B cell (primary cell): ENCODE measurements at regions of chr13 and their contacts with region 1.

Region 1: DNA sequence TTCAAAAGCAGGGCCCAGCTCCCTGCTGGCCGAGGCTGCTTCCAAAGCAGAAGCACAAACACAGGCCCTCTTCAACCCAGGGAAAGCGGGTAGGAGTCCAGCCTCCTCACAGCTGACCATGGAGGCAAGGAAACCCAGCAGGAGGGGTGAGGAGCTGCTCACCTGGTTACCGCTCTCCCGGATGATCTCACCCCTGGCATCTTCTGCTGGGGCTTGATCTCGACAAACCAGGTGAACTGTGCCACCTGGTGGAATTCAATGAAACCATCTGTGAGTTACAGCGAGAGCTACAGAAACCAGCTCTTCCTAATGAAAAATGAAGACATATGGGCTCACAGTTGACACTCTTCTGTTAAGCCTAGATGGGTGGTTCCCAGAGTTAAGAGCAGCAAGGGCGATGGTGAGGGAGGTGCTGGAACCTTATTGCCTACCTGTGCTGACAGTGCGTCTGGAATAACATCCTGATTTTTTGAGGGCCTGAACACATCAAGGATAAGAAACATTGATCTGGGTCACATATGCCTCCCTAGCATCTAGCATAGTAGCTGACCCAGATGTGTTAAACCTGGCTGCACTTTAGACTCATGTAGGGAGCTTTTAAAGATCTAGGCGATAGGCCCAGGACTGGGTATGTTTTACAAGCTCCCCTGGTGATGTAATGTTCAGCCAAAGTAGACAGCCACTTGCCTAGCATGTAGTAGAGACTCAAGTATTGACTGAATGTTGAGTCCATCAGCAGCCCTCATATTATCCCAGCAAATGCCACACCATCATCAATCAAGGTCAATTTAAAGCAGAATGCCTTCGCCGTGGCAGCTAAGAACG is 6.1 kb downstream of the DHRS12 start:
- DNase-seq: peak; percentile 76
- ATAC-seq: peak; percentile 60
- H3K4me3 ChIP-seq: no peak overlapping the region
- H3K4me3 Mint-ChIP-seq: no peak overlapping the region
- H3K27ac ChIP-seq: no peak overlapping the region
- H3K27ac Mint-ChIP-seq: peak overlapping the region; percentile 5
- H3K4me1 ChIP-seq: peaks cover 37 to 39% of the 10 kb centered on the region in 2 donors
- H3K4me1 Mint-ChIP-seq: peaks cover 45% of the 10 kb centered on the region
- H3K27me3 ChIP-seq: no peaks in the 10 kb centered on the region
- H3K27me3 Mint-ChIP-seq: no peaks in the 10 kb centered on the region
- CTCF ChIP-seq: peak; percentile 68

Region 2: GRCh38 chr13:51125498-51126226 is 672.2 kb before region 1 on chr13:
- CTCF ChIA-PET with region 1: interaction called, 55 read pairs
- POLR2A ChIA-PET with region 1: no interaction called
- intact Hi-C with region 1: no loop called
- DNase-seq: peak; percentile 71
- ATAC-seq: peak; percentile 80
- H3K4me3 ChIP-seq: no peak overlapping the region
- H3K4me3 Mint-ChIP-seq: no peak overlapping the region
- H3K27ac ChIP-seq: no peak overlapping the region
- H3K27ac Mint-ChIP-seq: no peak overlapping the region
- H3K4me1 ChIP-seq: peaks cover 0 to 8% of the 10 kb centered on the region in 2 donors
- H3K4me1 Mint-ChIP-seq: peaks cover 4% of the 10 kb centered on the region
- H3K27me3 ChIP-seq: peaks cover 0 to 6% (median 2%) of the 10 kb centered on the region in 4 experiments
- H3K27me3 Mint-ChIP-seq: peaks cover 25% of the 10 kb centered on the region
- CTCF ChIP-seq: peak; percentile 77

Region 3: GRCh38 chr13:51419001-51419636 is 378.8 kb before region 1 on chr13:
- CTCF ChIA-PET with region 1: interaction called, 12 read pairs
- POLR2A ChIA-PET with region 1: no interaction called
- intact Hi-C with region 1: no loop called
- DNase-seq: peak; percentile 60
- ATAC-seq: peak; percentile 78
- H3K4me3 ChIP-seq: peak overlapping the region in 3 of 5 experiments; percentile 7 to 42 (median 20)
- H3K4me3 Mint-ChIP-seq: peak overlapping the region; percentile 82
- H3K27ac ChIP-seq: peak overlapping the region; percentile 2 to 53
- H3K27ac Mint-ChIP-seq: peak overlapping the region; percentile 87
- H3K4me1 ChIP-seq: peaks cover 39 to 72% of the 10 kb centered on the region in 2 donors
- H3K4me1 Mint-ChIP-seq: peaks cover 75% of the 10 kb centered on the region
- H3K27me3 ChIP-seq: no peaks in the 10 kb centered on the region
- H3K27me3 Mint-ChIP-seq: no peaks in the 10 kb centered on the region
- CTCF ChIP-seq: no peak

Region 4: DNA sequence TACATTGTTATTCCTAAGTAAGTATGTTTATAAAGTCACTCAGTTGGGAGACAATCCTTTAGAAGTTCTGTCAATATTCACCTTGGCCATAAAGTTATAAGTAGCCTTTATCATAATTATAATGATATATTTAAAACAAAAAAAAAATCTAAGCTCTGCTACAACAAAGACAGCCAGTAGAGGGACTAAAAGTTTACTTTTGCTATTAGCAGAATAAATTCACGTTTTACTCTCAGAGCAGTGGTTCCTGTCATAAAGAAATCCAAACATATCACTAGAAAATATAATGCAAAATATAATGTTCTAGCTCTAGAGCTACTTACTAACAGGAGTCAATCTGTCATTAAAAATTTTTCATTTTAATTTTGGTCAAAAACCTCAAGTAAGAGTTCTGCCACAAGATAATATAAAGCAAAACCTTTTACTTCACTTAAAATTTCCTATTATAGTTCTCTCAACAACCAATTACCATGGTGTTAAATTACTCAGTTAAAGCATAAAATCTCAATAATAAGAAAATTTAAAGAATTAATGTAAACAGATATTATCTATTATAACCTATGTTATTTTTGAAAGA is 362.8 kb before region 1 on chr13:
- CTCF ChIA-PET with region 1: interaction called, 101 read pairs
- POLR2A ChIA-PET with region 1: no interaction called
- intact Hi-C with region 1: loop called (anchors 1 kb)
- DNase-seq: peak; percentile 50
- ATAC-seq: no peak
- H3K4me3 ChIP-seq: no peak overlapping the region
- H3K4me3 Mint-ChIP-seq: no peak overlapping the region
- H3K27ac ChIP-seq: no peak overlapping the region
- H3K27ac Mint-ChIP-seq: no peak overlapping the region
- H3K4me1 ChIP-seq: no peaks in the 10 kb centered on the region
- H3K4me1 Mint-ChIP-seq: peaks cover 7% of the 10 kb centered on the region
- H3K27me3 ChIP-seq: no peaks in the 10 kb centered on the region
- H3K27me3 Mint-ChIP-seq: no peaks in the 10 kb centered on the region
- CTCF ChIP-seq: peak; percentile 86

Region 5: DNA sequence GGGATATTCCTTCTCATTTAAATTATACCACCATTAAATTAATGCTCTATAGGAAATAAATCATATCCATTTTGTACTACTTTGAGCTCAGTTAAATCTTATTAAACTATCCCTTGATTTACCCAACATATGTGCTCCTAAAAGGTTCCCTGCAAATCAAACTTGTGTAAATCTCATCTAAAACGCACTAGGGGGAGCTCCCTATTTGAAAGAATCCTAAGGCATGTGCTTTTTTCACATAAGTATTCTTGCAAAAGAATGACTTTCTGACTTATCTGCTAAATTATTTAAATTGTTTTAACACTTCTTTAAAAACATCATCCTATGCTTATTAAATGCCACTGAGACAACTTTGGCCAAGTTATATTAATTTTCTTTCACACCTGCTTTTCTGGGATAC is 353.0 kb before region 1 on chr13:
- CTCF ChIA-PET with region 1: interaction called, 57 read pairs
- POLR2A ChIA-PET with region 1: no interaction called
- intact Hi-C with region 1: no loop called
- DNase-seq: peak; percentile 25
- ATAC-seq: no peak
- H3K4me3 ChIP-seq: no peak overlapping the region
- H3K4me3 Mint-ChIP-seq: no peak overlapping the region
- H3K27ac ChIP-seq: no peak overlapping the region
- H3K27ac Mint-ChIP-seq: no peak overlapping the region
- H3K4me1 ChIP-seq: no peaks in the 10 kb centered on the region
- H3K4me1 Mint-ChIP-seq: peaks cover 9% of the 10 kb centered on the region
- H3K27me3 ChIP-seq: no peaks in the 10 kb centered on the region
- H3K27me3 Mint-ChIP-seq: no peaks in the 10 kb centered on the region
- CTCF ChIP-seq: peak; percentile 30

Region 6: DNA sequence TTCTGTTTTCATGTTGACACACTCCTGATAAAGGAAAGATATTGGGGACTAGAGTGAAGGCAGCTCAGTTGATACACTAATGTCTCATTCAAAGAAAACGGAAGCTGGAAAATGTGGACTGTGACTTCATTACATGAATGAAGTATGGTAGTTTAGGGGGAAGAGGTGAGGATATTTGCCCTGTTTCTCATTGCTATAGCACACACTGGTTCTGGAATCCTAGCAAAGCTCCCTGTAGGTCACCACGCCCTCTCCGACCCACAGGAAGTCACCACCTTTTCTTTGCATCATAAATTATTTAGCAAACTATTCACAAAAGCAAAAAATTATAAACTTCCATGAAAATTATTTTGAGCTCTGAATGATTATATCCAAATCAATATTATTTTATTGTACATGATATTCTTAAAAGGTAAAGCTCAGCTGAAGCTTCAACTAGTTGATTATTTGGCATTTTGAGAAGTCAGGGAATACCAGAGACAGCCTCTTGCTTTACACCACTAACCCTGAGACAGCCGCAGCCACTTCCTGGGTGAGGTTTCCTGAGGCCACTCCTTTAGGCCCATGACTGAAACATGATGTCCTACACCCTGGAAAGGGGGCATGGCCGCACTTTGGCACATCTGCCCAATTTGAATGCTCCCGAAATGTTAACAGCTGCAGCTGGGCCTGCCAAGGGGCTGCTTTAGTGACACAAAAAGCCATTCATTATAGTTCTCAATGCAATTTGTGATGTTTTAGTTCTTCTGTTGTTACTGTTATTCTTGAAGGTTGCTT is 263.6 kb before region 1 on chr13:
- CTCF ChIA-PET with region 1: no interaction called
- POLR2A ChIA-PET with region 1: no interaction called
- intact Hi-C with region 1: no loop called
- DNase-seq: peak; percentile 13
- ATAC-seq: peak; percentile 28
- H3K4me3 ChIP-seq: peak overlapping the region in 1 of 5 experiments; percentile 33
- H3K4me3 Mint-ChIP-seq: peak overlapping the region; percentile 27
- H3K27ac ChIP-seq: peak overlapping the region in 1 of 2 donors; percentile 46
- H3K27ac Mint-ChIP-seq: peak overlapping the region; percentile 53
- H3K4me1 ChIP-seq: peaks cover 11 to 14% of the 10 kb centered on the region in 2 donors
- H3K4me1 Mint-ChIP-seq: peaks cover 26% of the 10 kb centered on the region
- H3K27me3 ChIP-seq: no peaks in the 10 kb centered on the region
- H3K27me3 Mint-ChIP-seq: no peaks in the 10 kb centered on the region
- CTCF ChIP-seq: no peak

Region 7: DNA sequence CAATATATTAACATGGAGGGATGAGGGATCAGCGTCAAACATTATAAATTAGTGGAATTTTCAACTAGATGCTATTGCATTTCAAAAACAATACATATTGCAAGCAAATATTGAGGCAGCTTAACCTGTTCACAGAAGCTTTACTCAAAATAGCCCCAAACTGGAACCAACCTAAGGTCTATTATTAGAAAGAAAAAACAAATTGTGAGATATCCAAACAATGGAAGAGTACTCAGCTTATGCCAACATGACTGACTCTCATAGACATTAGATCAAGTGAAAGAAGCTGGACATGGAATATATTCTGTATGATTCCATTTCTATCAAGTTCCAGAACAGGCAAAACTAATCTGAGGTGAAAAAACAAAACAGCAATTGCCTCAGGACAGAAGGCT is 389.1 kb after region 1 on chr13:
- CTCF ChIA-PET with region 1: no interaction called
- POLR2A ChIA-PET with region 1: no interaction called
- intact Hi-C with region 1: no loop called
- DNase-seq: no peak
- ATAC-seq: no peak
- H3K4me3 ChIP-seq: no peak overlapping the region
- H3K4me3 Mint-ChIP-seq: no peak overlapping the region
- H3K27ac ChIP-seq: no peak overlapping the region
- H3K27ac Mint-ChIP-seq: no peak overlapping the region
- H3K4me1 ChIP-seq: no peaks in the 10 kb centered on the region
- H3K4me1 Mint-ChIP-seq: peaks cover 4% of the 10 kb centered on the region
- H3K27me3 ChIP-seq: no peaks in the 10 kb centered on the region
- H3K27me3 Mint-ChIP-seq: no peaks in the 10 kb centered on the region
- CTCF ChIP-seq: no peak